PC-9 (cell line): ENCODE measurements at regions of chr3 and their contacts with region 1.

Region 1: DNA sequence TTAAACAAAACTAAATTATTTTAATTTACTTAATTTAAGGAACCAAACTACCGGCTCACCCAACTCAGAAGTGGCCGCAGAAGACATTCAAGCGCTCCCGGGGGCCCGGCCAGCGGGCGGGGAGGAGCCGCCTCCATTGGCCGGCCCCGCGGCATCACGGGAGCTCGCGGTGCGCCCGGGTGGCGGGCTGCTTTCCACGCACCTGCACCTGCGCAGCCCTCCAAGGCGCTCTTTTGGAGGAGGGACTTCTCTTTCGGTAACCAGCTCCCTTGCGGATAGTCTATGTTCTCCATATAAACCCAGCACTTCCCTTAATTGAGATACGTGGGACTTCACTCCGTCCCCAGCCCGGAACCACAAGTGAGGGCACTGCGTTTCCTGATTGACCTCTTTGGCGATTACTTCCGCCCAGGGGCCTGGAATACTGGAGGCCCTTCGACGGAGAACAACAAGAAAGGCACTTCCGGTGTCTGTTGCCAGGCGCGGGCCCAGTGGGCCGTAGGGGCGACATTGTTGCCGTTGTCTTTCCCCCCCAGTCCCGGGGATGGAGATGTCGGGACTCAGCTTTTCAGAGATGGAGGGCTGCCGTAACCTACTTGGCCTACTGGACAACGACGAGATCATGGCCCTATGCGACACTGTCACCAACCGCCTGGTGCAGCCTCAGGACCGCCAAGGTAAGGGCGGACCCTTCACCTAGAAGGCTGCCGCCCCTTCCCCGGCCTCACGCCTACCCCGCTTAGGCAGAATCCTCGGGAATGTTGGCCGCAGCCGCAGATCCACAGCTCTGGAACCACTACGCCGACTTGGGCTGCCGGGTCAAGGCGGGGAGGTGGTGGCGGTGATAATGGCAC is at the start of gene C3orf38:
- DNase-seq: peak; percentile 82 to 87
- H3K4me3 ChIP-seq: peak within 1 kb of the TSS; percentile 95
- H3K27ac ChIP-seq: peak within 1 kb of the TSS; percentile 90
- H3K4me1 ChIP-seq: peaks cover 17% of the 10 kb centered on the region
- H3K27me3 ChIP-seq: no peaks in the 10 kb centered on the region
- CTCF ChIP-seq: no peak
- total RNA-seq, gene C3orf38: 12.8 and 18.6 TPM in 2 replicates

Region 2: DNA sequence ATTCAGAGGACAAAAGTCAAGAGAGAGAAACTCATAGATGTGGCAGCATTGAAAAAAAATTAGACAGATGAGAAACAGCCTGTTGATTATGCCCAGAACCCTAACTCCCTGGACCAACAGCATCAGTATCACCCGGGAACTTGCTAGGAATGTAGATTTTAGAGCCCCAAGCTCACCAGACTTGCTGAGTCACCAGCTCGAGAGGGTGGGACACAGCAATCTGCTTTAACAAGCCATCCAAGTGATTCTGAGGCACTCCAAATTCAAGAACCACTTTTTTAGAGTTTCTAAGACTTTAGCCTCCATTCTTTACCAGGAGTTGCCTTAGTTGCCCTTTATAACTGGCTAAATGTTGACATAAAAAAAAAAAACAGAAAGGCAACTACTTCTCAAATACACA is 161.8 kb before region 1 on chr3:
- CTCF ChIA-PET with region 1: no interaction called
- POLR2A ChIA-PET with region 1: no interaction called
- intact Hi-C with region 1: no loop called
- DNase-seq: no peak
- H3K4me3 ChIP-seq: no peak overlapping the region
- H3K27ac ChIP-seq: no peak overlapping the region
- H3K4me1 ChIP-seq: no peaks in the 10 kb centered on the region
- H3K27me3 ChIP-seq: no peaks in the 10 kb centered on the region
- CTCF ChIP-seq: no peak

Region 3: DNA sequence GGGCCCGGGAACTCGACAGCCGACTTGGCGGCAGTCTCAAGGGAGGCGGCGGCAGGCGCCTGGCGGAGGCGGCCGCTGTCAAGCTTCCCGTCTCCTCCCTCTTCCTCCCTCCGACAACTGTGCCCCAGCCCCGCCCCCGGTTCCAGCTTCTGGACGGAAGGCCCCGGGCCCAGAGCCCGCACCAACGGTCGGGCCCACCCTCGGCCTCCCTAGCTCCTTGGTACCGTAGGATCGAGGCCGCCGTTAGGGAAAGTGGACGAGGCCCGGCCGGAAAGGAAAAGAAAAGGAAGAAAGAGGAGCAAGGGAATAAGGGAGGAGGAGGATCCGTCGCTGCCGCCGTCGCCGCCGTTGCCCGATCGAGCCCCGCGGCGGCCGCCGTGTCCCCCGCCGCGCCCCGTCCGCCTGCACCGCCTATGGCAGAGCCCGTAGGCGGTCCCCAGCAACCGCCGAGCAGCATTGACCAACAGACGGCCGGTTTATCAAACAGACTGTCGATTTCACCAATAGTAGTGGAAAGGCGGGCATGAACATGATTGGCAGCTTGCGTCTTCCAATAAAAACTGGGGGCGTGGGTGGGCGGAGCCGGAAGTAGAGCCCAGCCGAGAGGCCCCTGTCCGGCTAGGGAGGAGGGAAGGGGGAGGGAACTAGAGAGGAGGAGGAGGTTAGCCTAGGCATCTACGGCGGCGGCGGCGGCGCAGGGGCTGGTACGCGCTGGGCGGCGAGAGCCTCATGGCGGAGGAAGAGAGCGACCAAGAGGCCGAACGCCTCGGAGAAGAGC is 91.0 kb before region 1 on chr3 and contains the starts of genes CGGBP1 and ZNF654:
- CTCF ChIA-PET with region 1: no interaction called
- POLR2A ChIA-PET with region 1: no interaction called
- intact Hi-C with region 1: loop called (anchors 2 kb)
- DNase-seq: peak; percentile 96 to 98
- H3K4me3 ChIP-seq: peak within 1 kb of the TSS; percentile 89
- H3K27ac ChIP-seq: peak within 1 kb of the TSS; percentile 60
- H3K4me1 ChIP-seq: peaks cover 30% of the 10 kb centered on the region
- H3K27me3 ChIP-seq: no peaks in the 10 kb centered on the region
- CTCF ChIP-seq: no peak
- total RNA-seq, gene CGGBP1: 35.9 and 47.5 TPM in 2 replicates
- total RNA-seq, gene ZNF654: 7.2 and 9.6 TPM in 2 replicates

Region 4: GRCh38 chr3:88385090-88385489 is 235.4 kb after region 1 on chr3:
- CTCF ChIA-PET with region 1: no interaction called
- POLR2A ChIA-PET with region 1: interaction called, 10 read pairs
- intact Hi-C with region 1: no loop called
- DNase-seq: peak in 1 of 2 experiments; percentile 7
- H3K4me3 ChIP-seq: no peak overlapping the region
- H3K27ac ChIP-seq: no peak overlapping the region
- H3K4me1 ChIP-seq: no peaks in the 10 kb centered on the region
- H3K27me3 ChIP-seq: no peaks in the 10 kb centered on the region
- CTCF ChIP-seq: no peak